Transverse colon (tissue), 4 donors: ENCODE measurements at regions of chr21 and their contacts with region 1.

Region 1: DNA sequence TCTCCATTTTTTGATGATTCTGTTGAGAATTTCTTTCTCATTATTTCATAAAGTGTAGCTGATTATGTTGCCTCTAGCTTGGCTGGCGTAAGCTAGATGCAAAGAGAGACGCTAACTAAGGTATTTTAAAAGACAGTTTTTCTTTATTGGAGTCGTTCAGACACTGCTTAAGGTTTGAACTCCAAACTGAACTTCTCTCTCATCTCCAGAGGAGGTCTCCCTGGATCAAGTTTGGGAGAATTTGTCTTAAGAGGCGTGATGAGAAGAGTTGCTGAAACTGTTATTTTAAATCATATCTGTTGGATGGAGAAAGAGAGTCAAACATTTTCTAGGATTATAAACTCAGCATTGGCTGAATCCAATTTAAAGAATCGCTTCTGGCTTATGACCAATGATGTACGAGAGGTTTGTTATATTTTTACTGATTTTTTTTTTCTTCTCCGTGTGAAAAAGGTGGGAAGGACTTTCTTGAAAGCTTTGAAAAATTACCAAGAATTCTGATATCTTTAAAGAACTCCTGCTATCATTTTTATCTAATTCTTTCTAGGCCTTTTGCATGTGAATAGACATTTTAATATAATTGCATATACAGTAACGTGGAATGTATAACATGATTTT is 34.0 kb downstream of the MAP3K7CL start:
- DNase-seq: no peak
- H3K4me3 ChIP-seq: no peak overlapping the region
- H3K27ac ChIP-seq: peak overlapping the region in 1 of 4 donors; percentile 2
- H3K4me1 ChIP-seq: peaks cover 0 to 15% (median 0%) of the 10 kb centered on the region in 4 donors
- H3K27me3 ChIP-seq: no peaks in the 10 kb centered on the region
- CTCF ChIP-seq: peak; percentile 58 to 80 (median 75)
- EP300 ChIP-seq: no peak
- POLR2A ChIP-seq: no peak

Region 2: GRCh38 chr21:29279558-29279957 is 115.1 kb after region 1 on chr21:
- in situ Hi-C with region 1: no loop called
- intact Hi-C with region 1: no loop called
- DNase-seq: no peak
- H3K4me3 ChIP-seq: no peak overlapping the region
- H3K27ac ChIP-seq: no peak overlapping the region
- H3K4me1 ChIP-seq: no peaks in the 10 kb centered on the region
- H3K27me3 ChIP-seq: no peaks in the 10 kb centered on the region
- CTCF ChIP-seq: no peak
- EP300 ChIP-seq: no peak
- POLR2A ChIP-seq: no peak

Region 3: GRCh38 chr21:29298348-29299045 is 134.1 kb after region 1 on chr21 and contains the start of gene BACH1:
- in situ Hi-C with region 1: no loop called
- intact Hi-C with region 1: loop called (anchors 10 kb)
- DNase-seq: peak; percentile 92
- H3K4me3 ChIP-seq: peak within 1 kb of the TSS; percentile 45 to 95 (median 76)
- H3K27ac ChIP-seq: peak within 1 kb of the TSS; percentile 96 to 97 (median 96)
- H3K4me1 ChIP-seq: peaks cover 11 to 58% (median 49%) of the 10 kb centered on the region in 4 donors
- H3K27me3 ChIP-seq: no peaks in the 10 kb centered on the region
- CTCF ChIP-seq: peak in 4 of 5 experiments; percentile 14 to 54 (median 22)
- EP300 ChIP-seq: no peak
- POLR2A ChIP-seq: peak; percentile 87
- total RNA-seq, gene BACH1: 31.8 to 92.1 (median 42.0) TPM

Region 4: DNA sequence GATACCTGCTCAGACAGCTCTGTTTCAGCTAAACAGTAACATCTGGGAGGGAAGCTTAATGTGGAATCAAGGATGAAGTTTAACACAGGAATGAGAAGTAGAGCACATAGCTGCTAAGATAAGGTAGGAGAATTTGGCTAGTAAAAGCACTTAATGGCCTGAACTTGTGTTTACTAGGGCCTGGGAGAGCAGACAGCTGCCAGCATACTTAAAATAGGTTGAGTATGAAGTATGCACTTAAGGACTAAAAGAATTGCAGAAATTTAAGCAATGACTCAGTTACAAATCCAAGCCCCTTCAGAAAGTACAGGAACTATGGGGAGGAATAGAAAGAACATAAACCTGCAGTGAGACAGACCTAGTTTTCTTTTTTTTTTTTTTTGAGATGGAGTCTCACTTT is 187.3 kb after region 1 on chr21:
- in situ Hi-C with region 1: loop called in 1 of 4 experiments (anchors 10 kb)
- intact Hi-C with region 1: loop called (anchors 2 kb)
- DNase-seq: no peak
- H3K4me3 ChIP-seq: no peak overlapping the region
- H3K27ac ChIP-seq: no peak overlapping the region
- H3K4me1 ChIP-seq: peaks cover 0 to 18% (median 3%) of the 10 kb centered on the region in 4 donors
- H3K27me3 ChIP-seq: no peaks in the 10 kb centered on the region
- CTCF ChIP-seq: no peak
- EP300 ChIP-seq: no peak
- POLR2A ChIP-seq: no peak

Region 5: GRCh38 chr21:29394051-29394450 is 229.6 kb after region 1 on chr21:
- in situ Hi-C with region 1: no loop called
- intact Hi-C with region 1: no loop called
- DNase-seq: no peak
- H3K4me3 ChIP-seq: no peak overlapping the region
- H3K27ac ChIP-seq: no peak overlapping the region
- H3K4me1 ChIP-seq: no peaks in the 10 kb centered on the region
- H3K27me3 ChIP-seq: no peaks in the 10 kb centered on the region
- CTCF ChIP-seq: no peak
- EP300 ChIP-seq: no peak
- POLR2A ChIP-seq: no peak